AG04449 (cell line): ENCODE measurements at regions of chr1 and their contacts with region 1.

Region 1: GRCh38 chr1:205977402-205978014 is 25.7 kb downstream of the RAB7B start:
- DNase-seq: peak; percentile 66
- H3K4me3 ChIP-seq: no peak overlapping the region
- CTCF ChIP-seq: peak; percentile 94

Region 2: GRCh38 chr1:205610036-205610435 is 367.5 kb before region 1 on chr1:
- CTCF ChIA-PET with region 1: no interaction called
- POLR2A ChIA-PET with region 1: no interaction called
- DNase-seq: no peak
- H3K4me3 ChIP-seq: no peak overlapping the region
- CTCF ChIP-seq: no peak

Region 3: GRCh38 chr1:205711104-205712020 is 266.1 kb before region 1 on chr1:
- CTCF ChIA-PET with region 1: interaction called, 18 read pairs
- POLR2A ChIA-PET with region 1: no interaction called
- DNase-seq: peak; percentile 31
- H3K4me3 ChIP-seq: no peak overlapping the region
- CTCF ChIP-seq: peak; percentile 77

Region 4: GRCh38 chr1:205791568-205792180 is 185.8 kb before region 1 on chr1:
- CTCF ChIA-PET with region 1: interaction called, 417 read pairs
- POLR2A ChIA-PET with region 1: interaction called, 8 read pairs
- DNase-seq: no peak
- H3K4me3 ChIP-seq: no peak overlapping the region
- CTCF ChIP-seq: peak; percentile 89

Region 5: DNA sequence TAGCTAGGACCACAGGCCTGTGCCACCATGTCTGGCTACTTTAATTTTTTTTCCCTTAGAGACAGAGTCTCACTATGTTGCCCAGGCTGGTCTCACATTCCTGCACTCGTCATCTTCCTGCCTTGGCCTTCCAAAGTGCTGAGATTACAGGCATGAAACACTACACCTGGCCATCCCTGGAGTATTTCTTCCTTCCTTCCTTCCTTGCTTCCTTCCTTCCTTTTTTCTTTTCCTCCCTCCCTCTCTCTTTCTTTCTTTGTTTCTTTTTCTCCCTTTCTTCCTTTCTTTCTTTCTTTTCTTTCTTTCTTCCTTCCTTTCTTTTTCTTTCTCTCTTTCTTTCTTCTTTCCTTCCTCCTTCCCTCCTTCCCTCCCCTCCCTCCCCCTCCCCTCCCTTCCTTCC is 81.2 kb before region 1 on chr1:
- CTCF ChIA-PET with region 1: interaction called, 12 read pairs
- POLR2A ChIA-PET with region 1: interaction called, 4 read pairs
- DNase-seq: no peak
- H3K4me3 ChIP-seq: no peak overlapping the region
- CTCF ChIP-seq: no peak

Region 6: GRCh38 chr1:205933671-205934618 is 43.6 kb before region 1 on chr1:
- CTCF ChIA-PET with region 1: interaction called, 992 read pairs
- POLR2A ChIA-PET with region 1: no interaction called
- DNase-seq: no peak
- H3K4me3 ChIP-seq: no peak overlapping the region
- CTCF ChIP-seq: no peak

Region 7: GRCh38 chr1:205961405-205961804 is 16.1 kb before region 1 on chr1:
- CTCF ChIA-PET with region 1: interaction called, 171 read pairs
- POLR2A ChIA-PET with region 1: no interaction called
- DNase-seq: no peak
- H3K4me3 ChIP-seq: no peak overlapping the region
- CTCF ChIP-seq: no peak

Region 8: GRCh38 chr1:206106328-206107167 is 129.0 kb after region 1 on chr1:
- CTCF ChIA-PET with region 1: interaction called, 561 read pairs
- POLR2A ChIA-PET with region 1: no interaction called
- DNase-seq: peak; percentile 50
- H3K4me3 ChIP-seq: no peak overlapping the region
- CTCF ChIP-seq: peak; percentile 89